Adrenal gland (tissue), 19 donors: ENCODE measurements at regions of chr1 and their contacts with region 1.

Region 1: DNA sequence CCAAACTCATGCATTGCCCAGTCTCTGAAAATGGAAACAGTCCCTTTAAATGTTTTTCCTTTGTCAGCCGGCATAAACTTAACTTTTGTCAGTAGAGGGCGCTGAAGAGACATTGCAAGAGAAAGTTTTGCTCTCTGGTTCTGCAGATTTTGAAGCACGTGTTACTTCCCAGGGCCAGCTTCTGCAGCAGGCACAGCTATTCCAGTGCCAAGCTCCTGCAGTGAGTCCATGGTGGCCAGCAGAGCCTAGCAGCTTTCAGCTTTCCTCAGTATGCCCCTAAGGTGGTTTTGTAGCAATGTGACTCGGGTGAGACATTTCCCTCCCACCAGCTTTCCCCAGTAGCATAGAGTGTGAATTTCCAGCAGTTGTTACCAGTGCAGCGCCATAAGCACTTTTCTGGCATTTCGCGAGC is 2.6 kb upstream of the IFI44L start:
- DNase-seq: peak; percentile 72 to 89 (median 84)
- H3K4me3 ChIP-seq: no peak overlapping the region
- H3K27ac ChIP-seq: no peak overlapping the region
- H3K4me1 ChIP-seq: peaks cover 4 to 31% of the 10 kb centered on the region in 2 donors
- H3K27me3 ChIP-seq: no peaks in the 10 kb centered on the region
- CTCF ChIP-seq: peak; percentile 88 to 96 (median 92)
- POLR2A ChIP-seq: no peak

Region 2: GRCh38 chr1:78553859-78554258 is 63.8 kb before region 1 on chr1:
- intact Hi-C with region 1: no loop called
- DNase-seq: no peak
- H3K4me3 ChIP-seq: no peak overlapping the region
- H3K27ac ChIP-seq: no peak overlapping the region
- H3K4me1 ChIP-seq: no peaks in the 10 kb centered on the region
- H3K27me3 ChIP-seq: no peaks in the 10 kb centered on the region
- CTCF ChIP-seq: peak in 1 of 6 experiments; percentile 5
- POLR2A ChIP-seq: no peak

Region 3: DNA sequence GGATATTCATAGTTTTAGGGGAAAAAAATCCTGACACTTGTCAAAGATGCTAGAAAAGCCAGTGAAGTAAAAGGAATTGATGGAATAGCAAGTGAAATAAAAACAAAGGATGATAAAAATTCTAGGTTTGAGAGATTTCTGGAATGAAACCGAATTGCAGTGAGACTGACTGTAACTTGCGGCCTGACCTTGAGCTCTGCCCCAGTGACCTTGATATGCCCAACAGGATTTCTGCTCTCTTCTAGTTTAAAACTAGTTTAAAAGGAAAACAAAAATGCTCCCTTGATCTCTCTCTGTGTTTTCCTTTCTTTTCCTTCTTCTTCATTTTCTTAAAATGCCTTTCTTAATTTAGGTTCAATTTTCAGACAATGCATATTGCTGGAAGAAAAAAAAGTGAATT is 52.2 kb before region 1 on chr1:
- intact Hi-C with region 1: no loop called
- DNase-seq: peak in 3 of 7 donors; percentile 15 to 17 (median 17)
- H3K4me3 ChIP-seq: no peak overlapping the region
- H3K27ac ChIP-seq: no peak overlapping the region
- H3K4me1 ChIP-seq: no peaks in the 10 kb centered on the region
- H3K27me3 ChIP-seq: no peaks in the 10 kb centered on the region
- CTCF ChIP-seq: no peak
- POLR2A ChIP-seq: no peak

Region 4: DNA sequence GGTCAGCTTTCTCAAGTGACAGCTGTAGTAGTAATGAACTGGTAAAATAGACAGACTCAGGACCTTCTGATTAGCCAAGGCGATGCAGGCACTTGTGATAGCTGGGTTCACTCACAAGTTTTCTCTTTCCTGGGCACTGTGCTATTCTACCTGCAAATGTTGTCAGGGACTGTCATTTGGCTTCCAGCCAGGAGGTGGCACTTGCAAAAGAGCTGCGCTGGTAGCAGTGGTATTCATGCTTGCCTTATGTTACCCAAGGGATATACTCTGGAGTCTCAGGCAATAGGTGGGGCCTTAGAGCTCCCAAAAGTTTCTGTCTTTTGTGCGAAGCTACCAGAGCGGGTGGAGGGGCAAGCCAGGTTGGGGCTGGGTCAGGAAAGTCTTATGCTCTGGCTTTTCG is 55.5 kb after region 1 on chr1:
- intact Hi-C with region 1: loop called (anchors 5 kb)
- DNase-seq: peak in 1 of 7 donors; percentile 35
- H3K4me3 ChIP-seq: no peak overlapping the region
- H3K27ac ChIP-seq: no peak overlapping the region
- H3K4me1 ChIP-seq: no peaks in the 10 kb centered on the region
- H3K27me3 ChIP-seq: no peaks in the 10 kb centered on the region
- CTCF ChIP-seq: no peak
- POLR2A ChIP-seq: no peak

Region 5: DNA sequence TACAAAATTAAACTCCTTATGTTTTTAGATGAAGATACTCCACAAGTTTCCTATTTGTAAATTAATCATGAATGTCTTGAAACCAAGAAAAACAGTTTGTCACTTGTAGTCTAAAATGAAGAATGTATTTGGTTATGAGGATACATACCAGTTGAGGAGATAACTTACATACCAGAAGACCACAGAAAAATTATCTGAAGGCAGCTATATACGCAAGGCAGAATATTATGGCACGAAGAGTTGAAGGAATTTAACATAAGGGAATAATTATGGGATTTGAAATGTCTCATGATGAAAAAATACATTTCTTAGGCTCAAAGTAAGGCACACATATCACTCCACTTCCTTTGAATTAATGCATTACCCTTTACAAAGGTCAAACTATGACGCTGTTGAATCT is 105.3 kb after region 1 on chr1:
- intact Hi-C with region 1: no loop called
- DNase-seq: no peak
- H3K4me3 ChIP-seq: no peak overlapping the region
- H3K27ac ChIP-seq: no peak overlapping the region
- H3K4me1 ChIP-seq: no peaks in the 10 kb centered on the region
- H3K27me3 ChIP-seq: no peaks in the 10 kb centered on the region
- CTCF ChIP-seq: no peak
- POLR2A ChIP-seq: no peak

Region 6: DNA sequence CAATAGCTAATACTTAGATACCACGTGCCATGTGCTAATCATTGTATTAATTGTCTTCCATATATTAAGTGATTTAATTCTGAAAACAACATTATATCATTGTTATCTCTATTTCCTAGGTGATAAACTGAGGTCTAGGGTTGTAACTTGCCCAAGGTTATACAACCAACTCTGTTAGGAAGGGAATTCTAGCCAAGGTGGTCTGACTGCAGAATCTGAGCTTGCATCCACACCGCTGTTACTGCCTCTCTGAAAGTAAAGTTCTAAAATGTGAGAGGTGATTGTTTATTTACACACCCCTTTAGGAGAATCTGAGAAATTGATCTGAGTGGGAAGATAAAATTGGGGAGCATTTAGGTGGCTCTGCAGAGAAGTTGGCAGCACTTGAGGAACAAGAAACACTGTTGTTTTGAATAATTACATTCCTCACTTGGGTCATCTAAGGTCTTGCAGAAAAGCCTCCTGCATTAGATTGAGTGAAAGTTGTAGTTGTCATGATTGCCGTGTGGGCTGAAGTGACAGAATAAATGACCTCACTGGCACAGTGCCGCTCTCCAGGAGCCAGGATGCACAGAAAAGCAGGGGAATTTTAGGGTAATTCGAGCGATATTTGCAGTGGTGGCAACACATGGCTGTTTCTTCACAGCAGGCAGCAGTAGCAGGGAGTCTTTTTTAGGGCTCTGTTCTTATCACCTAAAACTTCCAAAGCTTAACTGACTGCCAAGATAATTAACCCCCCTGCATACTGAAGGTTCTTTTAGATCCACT is 267.2 kb after region 1 on chr1:
- intact Hi-C with region 1: no loop called
- DNase-seq: no peak
- H3K4me3 ChIP-seq: no peak overlapping the region
- H3K27ac ChIP-seq: no peak overlapping the region
- H3K4me1 ChIP-seq: no peaks in the 10 kb centered on the region
- H3K27me3 ChIP-seq: no peaks in the 10 kb centered on the region
- CTCF ChIP-seq: no peak
- POLR2A ChIP-seq: no peak